ENCODE measurements at regions of chr14 and their contacts with region 1.

Region 1: DNA sequence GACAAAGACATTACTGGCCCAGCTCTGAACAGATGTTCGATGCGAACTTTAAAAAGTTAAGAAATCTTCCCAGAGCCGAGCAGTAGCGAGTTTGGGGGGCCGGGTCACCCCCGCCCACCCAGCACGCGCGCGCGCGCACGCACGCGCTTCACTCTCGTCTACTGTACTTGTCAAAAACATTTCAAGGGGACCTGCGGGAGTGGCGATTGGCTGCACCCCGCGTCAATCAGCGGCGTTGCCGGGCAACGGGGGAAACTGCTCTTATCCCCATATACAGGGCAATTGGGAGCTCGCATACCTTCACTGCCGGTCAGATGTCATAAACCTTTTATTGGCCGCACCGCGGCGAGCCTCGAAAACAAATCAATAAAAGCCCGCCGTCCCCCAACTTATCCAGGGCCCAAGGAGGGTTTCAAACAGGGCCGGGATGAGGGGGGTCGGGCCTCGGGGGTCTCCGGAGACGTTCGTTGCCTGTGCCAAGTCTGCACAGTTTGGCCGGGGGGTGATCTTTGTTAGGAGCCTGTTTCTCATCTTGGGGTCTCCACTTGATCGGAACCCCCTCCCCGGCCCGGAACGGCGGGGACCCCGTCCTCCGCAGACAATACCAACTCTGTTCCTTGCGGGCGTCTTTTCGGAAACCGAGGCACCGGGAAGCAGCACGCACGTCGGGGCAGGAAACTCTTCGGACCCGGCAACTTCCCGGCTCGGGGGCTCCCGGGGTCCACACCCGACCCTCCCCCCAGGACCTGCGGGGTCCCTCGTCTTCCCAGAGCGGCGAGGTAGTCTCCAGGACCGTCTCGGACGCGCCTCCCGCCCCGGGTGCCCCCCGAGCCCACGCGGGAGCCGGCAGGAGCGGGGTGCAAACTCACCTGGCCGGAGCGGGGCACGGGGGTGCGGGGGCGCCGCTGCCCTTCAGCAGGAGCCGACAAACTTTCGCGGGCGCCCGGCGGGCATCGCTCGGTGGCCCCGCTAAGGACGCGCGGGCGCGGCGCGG is 734 bp downstream of the FOXN3 start:
- DNase-seq: peak; percentile 96
- H3K4me3 ChIP-seq: peak overlapping the region; percentile 99
- H3K27ac ChIP-seq: peak overlapping the region; percentile 70
- H3K4me1 ChIP-seq: peaks cover 42% of the 10 kb centered on the region
- CTCF ChIP-seq: no peak

Region 2: GRCh38 chr14:89178802-89179535 is 237.3 kb before region 1 on chr14:
- CTCF ChIA-PET with region 1: no interaction called
- POLR2A ChIA-PET with region 1: interaction called, 3 read pairs
- intact Hi-C with region 1: loop called (anchors 1 kb)
- DNase-seq: no peak
- H3K4me3 ChIP-seq: no peak overlapping the region
- H3K27ac ChIP-seq: no peak overlapping the region
- H3K4me1 ChIP-seq: peaks cover 10% of the 10 kb centered on the region
- CTCF ChIP-seq: no peak

Region 3: GRCh38 chr14:89309670-89310177 is 106.6 kb before region 1 on chr14:
- CTCF ChIA-PET with region 1: interaction called, 3 read pairs
- POLR2A ChIA-PET with region 1: interaction called, 4 read pairs
- intact Hi-C with region 1: loop called (anchors 1 kb)
- DNase-seq: peak; percentile 65
- H3K4me3 ChIP-seq: peak overlapping the region; percentile 33
- H3K27ac ChIP-seq: peak overlapping the region; percentile 99
- H3K4me1 ChIP-seq: peaks cover 65% of the 10 kb centered on the region
- CTCF ChIP-seq: no peak

Region 4: GRCh38 chr14:89365061-89365801 is 51.1 kb before region 1 on chr14:
- CTCF ChIA-PET with region 1: no interaction called
- POLR2A ChIA-PET with region 1: interaction called, 9 read pairs
- intact Hi-C with region 1: loop called (anchors 2 kb)
- DNase-seq: peak; percentile 82
- H3K4me3 ChIP-seq: peak overlapping the region; percentile 63
- H3K27ac ChIP-seq: peak overlapping the region; percentile 91
- H3K4me1 ChIP-seq: peaks cover 57% of the 10 kb centered on the region
- CTCF ChIP-seq: no peak

Region 5: DNA sequence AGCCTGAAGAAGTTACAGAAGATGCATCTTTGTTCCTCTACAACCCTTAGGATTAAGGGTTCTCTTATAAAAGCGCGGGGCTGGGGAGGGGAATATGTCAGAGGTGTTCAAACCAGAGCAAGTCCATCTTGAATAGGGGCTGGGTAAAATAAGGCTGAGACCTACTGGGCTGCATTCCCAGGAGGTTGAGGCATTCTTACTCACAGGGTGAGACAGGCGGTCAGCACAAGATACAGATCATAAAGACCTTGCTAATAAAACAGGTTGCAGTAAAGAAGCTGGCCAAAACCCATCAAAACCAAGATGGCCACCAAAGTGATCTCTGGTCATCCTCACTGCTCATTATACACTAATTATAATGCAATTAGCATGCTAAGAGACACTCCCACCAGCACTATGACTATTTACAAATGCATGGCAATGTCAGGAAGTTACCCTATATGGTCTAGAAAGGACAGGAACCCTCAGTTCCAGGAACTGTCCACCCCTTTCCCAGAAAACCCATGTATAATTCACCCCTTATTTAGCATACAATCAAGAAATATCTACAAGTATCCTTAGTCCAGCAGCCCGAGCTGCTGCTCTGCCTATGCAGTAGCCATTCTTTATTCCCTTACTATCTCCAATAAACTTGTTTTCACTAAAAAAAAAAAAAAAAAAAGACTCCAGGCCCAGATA is 108.8 kb after region 1 on chr14:
- CTCF ChIA-PET with region 1: no interaction called
- POLR2A ChIA-PET with region 1: no interaction called
- intact Hi-C with region 1: no loop called
- DNase-seq: no peak
- H3K4me3 ChIP-seq: no peak overlapping the region
- H3K27ac ChIP-seq: no peak overlapping the region
- H3K4me1 ChIP-seq: no peaks in the 10 kb centered on the region
- CTCF ChIP-seq: no peak

Region 6: GRCh38 chr14:89618811-89619551 is 202.7 kb after region 1 on chr14:
- CTCF ChIA-PET with region 1: no interaction called
- POLR2A ChIA-PET with region 1: no interaction called
- intact Hi-C with region 1: loop called (anchors 5 kb)
- DNase-seq: peak; percentile 86
- H3K4me3 ChIP-seq: peak overlapping the region; percentile 81
- H3K27ac ChIP-seq: peak overlapping the region; percentile 74
- H3K4me1 ChIP-seq: peaks cover 58% of the 10 kb centered on the region
- CTCF ChIP-seq: peak; percentile 13; the same call in 1 of the 2 replicates

Region 7: GRCh38 chr14:89915114-89915878 is 499.0 kb after region 1 on chr14:
- CTCF ChIA-PET with region 1: no interaction called
- POLR2A ChIA-PET with region 1: no interaction called
- intact Hi-C with region 1: loop called (anchors 5 kb)
- DNase-seq: peak; percentile 68
- H3K4me3 ChIP-seq: no peak overlapping the region
- H3K27ac ChIP-seq: no peak overlapping the region
- H3K4me1 ChIP-seq: no peaks in the 10 kb centered on the region
- CTCF ChIP-seq: peak; percentile 99

Region 8: DNA sequence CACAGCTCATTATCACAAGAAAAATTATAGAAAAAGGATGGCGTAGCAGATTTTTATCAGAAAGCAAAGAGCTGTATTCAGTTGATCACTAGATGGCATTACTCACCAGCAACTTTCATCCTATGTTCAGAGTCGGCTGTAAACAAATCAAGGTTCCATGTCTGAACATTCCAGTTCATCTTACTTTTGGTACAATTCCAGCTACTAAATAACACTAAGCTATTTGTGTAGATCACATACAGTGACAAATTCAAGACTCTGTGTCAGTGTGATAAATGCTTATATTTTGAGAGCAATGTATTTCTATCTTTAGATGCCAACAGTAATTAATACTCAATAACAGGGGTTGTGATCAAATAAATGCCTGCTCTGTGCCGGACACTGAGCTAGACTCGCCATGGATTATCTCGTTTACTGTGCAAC is 885.4 kb after region 1 on chr14:
- CTCF ChIA-PET with region 1: no interaction called
- POLR2A ChIA-PET with region 1: no interaction called
- intact Hi-C with region 1: no loop called
- DNase-seq: peak; percentile 26
- H3K4me3 ChIP-seq: no peak overlapping the region
- H3K27ac ChIP-seq: no peak overlapping the region
- H3K4me1 ChIP-seq: no peaks in the 10 kb centered on the region
- CTCF ChIP-seq: peak; percentile 73

Measured in OCI-LY7 (cell line).